Left cardiac atrium (tissue), 4 donors: ENCODE measurements at regions of chr1 and their contacts with region 1.

Region 1: GRCh38 chr1:246699095-246699735 is 25.0 kb upstream of the SCCPDH start:
- DNase-seq: peak; percentile 89
- ATAC-seq: peak; percentile 95

Region 2: DNA sequence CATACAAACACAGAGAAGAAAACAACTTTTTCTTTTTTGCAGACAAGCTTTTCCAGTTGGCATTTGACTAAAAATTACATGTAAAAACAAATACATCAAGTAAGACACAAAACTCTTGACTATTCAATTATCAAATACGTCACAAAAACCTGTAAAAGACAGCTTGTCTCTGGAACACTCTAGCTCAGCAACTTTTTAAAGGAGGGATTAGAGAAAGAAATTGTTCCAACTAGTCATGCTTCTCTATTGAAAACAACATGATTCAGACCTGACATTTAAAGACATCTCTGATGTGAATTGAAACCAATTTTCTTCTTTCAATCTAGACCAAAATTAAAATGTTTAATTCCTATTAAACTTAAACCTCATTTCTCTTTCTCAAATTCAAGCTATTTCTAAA is 222.4 kb before region 1 on chr1:
- intact Hi-C with region 1: no loop called
- DNase-seq: no peak
- ATAC-seq: no peak

Region 3: DNA sequence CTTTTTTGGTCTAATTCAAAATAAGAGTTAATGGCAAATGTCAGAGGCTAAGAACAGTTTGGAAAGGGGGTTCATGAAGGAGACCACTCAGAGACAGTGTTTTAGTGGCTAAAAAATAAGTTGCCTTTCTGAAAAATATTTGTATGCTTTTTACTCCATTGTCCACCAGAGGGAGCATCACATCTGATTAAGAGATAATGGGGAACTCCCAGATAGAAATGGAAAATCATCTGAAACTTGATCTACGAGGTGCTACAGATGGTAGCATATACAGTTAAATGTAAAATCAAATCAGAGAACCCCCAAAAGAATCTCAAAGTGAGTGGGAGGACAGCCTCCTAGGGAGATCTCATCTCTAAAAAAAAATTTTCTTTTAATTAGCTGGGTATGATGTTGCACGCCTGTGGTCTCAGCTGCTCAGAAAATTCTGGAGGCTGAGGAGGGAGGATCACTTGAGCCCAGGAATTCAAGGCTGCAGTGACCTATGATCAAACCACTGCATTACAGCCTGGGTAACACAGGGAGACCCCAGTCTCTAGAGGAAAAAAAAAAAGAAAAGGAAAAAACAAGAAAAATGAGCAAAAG is 201.8 kb before region 1 on chr1:
- intact Hi-C with region 1: loop called (anchors 2 to 5 kb)
- DNase-seq: no peak
- ATAC-seq: peak in 1 of 2 donors; percentile 35

Region 4: DNA sequence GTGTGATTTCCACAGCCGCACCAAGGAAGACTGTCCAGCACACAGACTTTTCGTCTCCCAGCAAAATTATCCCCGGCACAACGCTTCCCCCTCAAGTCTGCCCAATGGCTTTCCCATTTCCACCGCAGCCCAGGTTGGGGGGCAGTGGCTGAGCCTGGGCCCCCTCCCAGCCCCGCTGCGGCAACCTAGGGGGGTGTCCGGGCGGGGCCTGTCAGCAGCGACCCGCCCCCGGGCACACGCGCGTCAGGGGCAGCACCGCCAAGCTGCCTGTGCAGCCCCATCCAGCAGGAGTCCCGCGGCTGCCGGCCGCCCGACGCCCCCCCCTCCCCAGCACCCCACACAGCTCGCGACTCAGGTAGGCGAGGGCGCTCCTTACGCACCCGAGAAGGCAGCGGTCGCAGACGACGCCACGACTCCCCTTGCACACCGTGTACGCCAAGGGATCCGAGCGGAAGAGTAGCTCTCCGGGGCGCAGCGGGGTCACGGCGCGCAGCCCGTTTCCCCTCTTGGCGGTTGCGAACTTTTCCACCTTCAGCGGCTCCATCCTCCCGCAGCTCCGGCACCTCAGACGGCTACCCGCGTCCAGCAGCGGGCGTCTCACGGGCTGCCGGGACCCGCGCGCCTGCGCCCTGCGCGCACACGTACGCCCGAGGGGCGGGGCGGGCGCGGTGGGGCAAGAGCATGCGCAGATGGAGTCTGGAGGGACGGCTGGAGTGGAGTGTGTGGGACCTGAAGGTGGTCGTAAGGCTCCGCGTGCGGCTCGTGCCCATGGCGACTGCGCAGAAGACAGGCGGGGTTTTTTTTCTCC is 192.3 kb before region 1 on chr1 and contains the start of gene SMYD3:
- intact Hi-C with region 1: loop called in 1 of 2 experiments (anchors 5 kb)
- DNase-seq: peak; percentile 84
- ATAC-seq: peak; percentile 99
- total RNA-seq, gene SMYD3: 6.5 to 11.9 TPM

Region 5: GRCh38 chr1:246566128-246566812 is 132.9 kb before region 1 on chr1 and contains the starts of genes CNST and TFB2M:
- intact Hi-C with region 1: loop called in 1 of 2 experiments (anchors 10 kb)
- DNase-seq: peak; percentile 98
- ATAC-seq: peak; percentile 98
- total RNA-seq, gene CNST: 17.0 to 18.3 TPM
- total RNA-seq, gene TFB2M: 10.7 to 12.9 TPM

Region 6: GRCh38 chr1:246647113-246647512 is 52.1 kb before region 1 on chr1:
- intact Hi-C with region 1: loop called in 1 of 2 experiments (anchors 5 kb)
- DNase-seq: peak; percentile 63
- ATAC-seq: peak; percentile 93 to 95

Region 7: GRCh38 chr1:246931549-246932365 is 232.5 kb after region 1 on chr1 and contains the start of gene AHCTF1:
- intact Hi-C with region 1: no loop called
- DNase-seq: peak; percentile 97
- ATAC-seq: peak; percentile 98 to 99
- total RNA-seq, gene AHCTF1: 20.0 to 23.6 TPM